Activated CD4-positive, alpha-beta T cell treated with anti-CD3 and anti-CD28 coated beads, Interleukin-2, amount 10 ng/mL, durations not matched to agents 24 days and 14 days (primary cell): ENCODE measurements at regions of chr12 and their contacts with region 1.

Region 1: GRCh38 chr12:8949342-8950220 is at the start of gene M6PR:
- DNase-seq: peak; percentile 97
- H3K4me3 Mint-ChIP-seq: peak within 1 kb of the TSS; percentile 98
- H3K27ac Mint-ChIP-seq: peak within 1 kb of the TSS; percentile 93
- H3K4me1 Mint-ChIP-seq: peaks cover 50% of the 10 kb centered on the region
- H3K27me3 Mint-ChIP-seq: no peaks in the 10 kb centered on the region
- total RNA-seq, gene M6PR: 160 and 167 TPM in 2 replicates

Region 2: DNA sequence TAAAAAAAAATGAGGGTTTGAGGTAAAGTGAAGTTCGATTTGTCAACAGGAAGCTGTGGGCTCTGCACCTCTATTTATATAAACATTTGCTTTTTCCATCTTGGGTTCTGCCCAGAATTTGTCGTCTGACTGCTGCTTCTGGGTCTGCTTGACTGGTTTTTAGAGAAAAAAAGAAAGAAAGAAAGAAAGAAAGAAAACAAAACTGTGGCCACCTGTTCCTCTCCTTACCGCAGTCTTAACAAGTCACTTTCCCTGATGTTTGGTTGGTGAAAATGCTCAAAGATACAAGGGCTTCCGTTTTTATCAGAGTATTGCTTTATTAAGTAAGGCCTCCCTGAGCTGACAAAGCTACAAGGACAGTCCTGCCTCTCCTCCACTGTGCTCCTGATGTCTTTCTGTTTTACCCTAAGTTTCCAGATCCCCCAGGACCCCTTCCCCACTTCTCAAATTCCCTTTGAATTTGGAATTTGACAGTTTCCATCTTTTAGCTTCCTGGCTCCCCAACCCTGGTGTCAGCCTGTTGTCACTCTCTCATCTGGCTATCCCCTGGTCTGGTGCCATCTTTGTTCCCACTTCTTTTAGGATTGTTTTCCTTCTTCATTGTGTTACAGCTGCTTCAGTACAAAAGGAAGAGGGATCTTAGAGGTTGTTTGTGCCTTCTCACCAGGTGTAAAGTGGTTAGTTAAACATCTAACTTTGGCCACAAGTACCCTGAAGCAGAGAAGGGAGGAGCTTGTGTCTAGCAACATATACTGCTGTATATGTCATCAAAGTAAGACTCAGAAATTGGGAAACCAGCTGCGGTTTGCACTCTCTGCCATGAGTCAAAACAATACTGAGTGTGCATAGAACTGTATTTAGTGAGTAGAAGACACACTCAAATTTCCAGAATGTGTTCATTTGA is 305.0 kb before region 1 on chr12:
- intact Hi-C with region 1: loop called (anchors 5 kb)
- DNase-seq: peak; percentile 89
- H3K4me3 Mint-ChIP-seq: peak overlapping the region; percentile 72
- H3K27ac Mint-ChIP-seq: peak overlapping the region; percentile 77
- H3K4me1 Mint-ChIP-seq: peaks cover 41% of the 10 kb centered on the region
- H3K27me3 Mint-ChIP-seq: peaks cover 43% of the 10 kb centered on the region

Region 3: DNA sequence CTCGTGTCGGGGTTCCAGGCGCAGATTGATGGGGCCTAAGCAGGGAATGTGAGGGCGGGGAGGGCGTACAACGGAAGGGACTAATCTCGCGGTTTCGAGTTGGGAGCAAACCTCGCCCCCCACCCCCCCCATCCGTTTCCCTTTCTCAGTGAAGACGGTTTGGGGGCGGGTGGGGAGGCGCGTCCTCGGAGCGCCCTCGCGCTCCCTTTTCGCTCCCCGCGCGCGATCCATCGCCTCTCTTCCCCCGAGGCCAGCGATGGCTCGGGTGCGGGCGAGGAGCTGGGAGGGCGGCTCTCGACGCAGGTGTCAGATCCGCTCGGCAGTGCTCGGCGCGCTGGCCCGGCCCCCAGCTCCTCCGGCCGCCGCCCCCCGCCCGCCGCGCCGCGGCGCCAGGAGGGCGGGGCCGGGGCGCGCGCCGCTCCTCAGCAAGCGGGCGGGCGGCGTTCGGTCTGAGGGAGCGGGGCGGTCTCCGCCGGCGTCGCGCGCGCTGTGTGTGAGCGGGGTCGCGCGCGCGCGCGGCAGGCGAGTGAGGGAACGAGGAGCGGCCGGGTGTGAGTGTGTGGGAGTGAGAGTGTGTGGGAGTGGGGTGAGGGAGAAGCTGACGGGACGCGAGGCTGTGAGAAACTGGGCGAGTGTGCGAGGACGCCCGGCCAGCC is 252.0 kb before region 1 on chr12 and contains the start of gene RIMKLB:
- intact Hi-C with region 1: loop called (anchors 5 kb)
- DNase-seq: peak; percentile 88
- H3K4me3 Mint-ChIP-seq: peak within 1 kb of the TSS; percentile 89
- H3K27ac Mint-ChIP-seq: peak within 1 kb of the TSS; percentile 79
- H3K4me1 Mint-ChIP-seq: peaks cover 12% of the 10 kb centered on the region
- H3K27me3 Mint-ChIP-seq: peaks cover 55% of the 10 kb centered on the region
- total RNA-seq, gene RIMKLB: 0.68 and 0.88 TPM in 2 replicates

Region 4: DNA sequence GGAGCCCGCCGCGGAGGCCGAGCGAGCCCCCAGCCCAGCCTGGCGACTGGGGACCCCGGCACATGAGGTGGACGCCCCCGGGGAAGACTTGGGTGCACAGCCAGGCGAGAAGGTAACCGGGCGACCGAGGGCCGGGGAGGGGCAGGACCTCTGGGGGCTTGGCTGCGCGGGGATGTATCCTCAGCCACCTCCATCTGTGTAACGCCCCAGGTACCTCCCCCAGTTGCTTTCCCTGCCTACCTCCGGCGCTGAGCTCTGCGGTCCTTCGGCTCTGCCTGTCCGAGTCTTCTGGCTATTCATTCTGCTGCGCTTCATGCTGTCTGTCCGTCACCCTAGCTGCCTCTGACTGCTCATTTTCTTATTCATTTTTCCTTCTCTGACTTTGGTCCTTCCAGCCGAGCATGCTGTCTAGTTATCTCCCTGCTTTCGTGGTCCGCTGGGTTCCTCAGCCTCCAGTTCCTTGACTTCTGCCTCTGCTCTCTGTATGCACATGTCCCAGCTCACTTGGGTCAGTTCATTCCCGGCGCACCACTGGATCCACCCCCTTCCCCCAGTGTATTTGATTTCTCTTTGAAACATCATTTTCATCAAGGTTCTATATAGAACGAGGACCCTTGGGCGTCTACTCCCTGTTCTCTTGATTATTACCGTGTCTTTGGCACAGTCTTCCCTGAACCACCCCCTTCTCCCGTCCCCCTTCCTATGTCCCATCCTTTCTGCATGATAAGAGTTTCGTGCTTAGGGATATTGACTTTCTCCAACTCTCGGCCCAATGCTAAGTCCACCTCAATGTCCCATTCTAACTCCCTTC is 34.7 kb before region 1 on chr12:
- intact Hi-C with region 1: loop called (anchors 2 kb)
- DNase-seq: peak; percentile 90
- H3K4me3 Mint-ChIP-seq: no peak overlapping the region
- H3K27ac Mint-ChIP-seq: no peak overlapping the region
- H3K4me1 Mint-ChIP-seq: peaks cover 9% of the 10 kb centered on the region
- H3K27me3 Mint-ChIP-seq: peaks cover 13% of the 10 kb centered on the region

Region 5: GRCh38 chr12:8996682-8997360 is 47.2 kb after region 1 on chr12:
- intact Hi-C with region 1: loop called (anchors 1 kb)
- DNase-seq: peak; percentile 70
- H3K4me3 Mint-ChIP-seq: no peak overlapping the region
- H3K27ac Mint-ChIP-seq: no peak overlapping the region
- H3K4me1 Mint-ChIP-seq: peaks cover 15% of the 10 kb centered on the region
- H3K27me3 Mint-ChIP-seq: peaks cover 18% of the 10 kb centered on the region

Region 6: DNA sequence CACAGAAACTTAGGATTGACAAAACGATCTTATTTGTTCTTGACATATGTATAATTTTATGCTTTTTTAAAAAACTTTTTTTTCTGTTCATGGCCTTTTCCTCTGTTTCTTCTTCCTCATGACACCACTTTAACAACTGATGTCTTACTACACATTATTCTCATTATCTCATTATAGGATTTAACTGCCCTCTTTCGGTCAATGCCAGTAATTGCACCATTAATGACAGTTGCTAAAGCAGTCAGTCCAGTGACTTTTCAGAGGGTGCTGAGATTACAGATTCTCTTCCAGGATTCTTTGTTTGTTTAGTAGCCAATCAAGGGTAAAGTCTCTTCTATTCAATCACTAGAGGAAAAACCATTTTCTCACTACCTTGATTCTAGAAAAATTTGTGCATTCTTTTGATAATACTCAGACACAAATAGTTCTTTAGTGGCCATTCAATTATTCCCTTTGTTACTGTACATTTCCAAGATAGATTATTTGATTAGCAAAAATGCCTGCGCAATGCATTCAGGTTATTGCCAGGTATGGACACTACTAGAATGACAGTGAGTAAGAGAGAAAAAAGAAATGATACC is 89.9 kb after region 1 on chr12:
- intact Hi-C with region 1: loop called (anchors 1 kb)
- DNase-seq: peak; percentile 76
- H3K4me3 Mint-ChIP-seq: no peak overlapping the region
- H3K27ac Mint-ChIP-seq: no peak overlapping the region
- H3K4me1 Mint-ChIP-seq: peaks cover 19% of the 10 kb centered on the region
- H3K27me3 Mint-ChIP-seq: peaks cover 12% of the 10 kb centered on the region